ENCODE measurements at regions of chr13 and their contacts with region 1.

Region 1: DNA sequence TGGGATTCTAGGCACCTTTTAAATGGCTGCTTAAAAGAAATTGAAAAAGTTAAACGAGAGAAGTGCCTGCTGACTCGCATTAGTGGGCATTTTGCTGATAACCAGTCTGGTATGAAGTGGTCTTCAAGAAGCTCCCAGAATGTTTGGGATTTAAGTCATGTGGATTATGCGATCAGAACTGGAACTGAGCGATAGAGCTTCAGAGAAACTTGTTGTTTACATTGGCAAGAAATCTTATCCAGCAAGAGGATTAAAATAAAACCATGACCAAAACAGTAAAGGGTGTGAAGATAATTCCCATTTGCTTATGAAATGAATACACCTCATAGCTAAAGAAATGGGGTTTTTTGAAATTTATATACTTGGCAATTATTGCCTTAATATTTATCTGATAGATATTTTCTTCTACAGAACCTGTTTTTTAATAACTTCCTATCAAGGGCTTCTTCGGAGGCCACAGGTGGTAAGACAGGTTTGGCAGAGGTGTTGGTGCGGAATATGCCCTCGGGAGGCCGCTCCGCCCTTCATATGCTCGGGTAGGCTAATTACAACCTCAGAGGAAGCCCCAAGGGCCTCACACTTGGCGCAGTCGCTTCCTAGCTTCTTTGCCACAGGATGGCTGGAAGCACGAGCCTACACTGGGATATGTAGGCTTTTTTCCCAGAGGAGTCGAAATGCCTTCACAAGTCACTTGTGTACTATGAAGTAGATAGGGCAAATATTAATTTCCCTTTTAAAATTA is 68.6 kb downstream of the LMO7 start:
- DNase-seq: peak; percentile 74
- ATAC-seq: peak; percentile 75
- H3K4me3 ChIP-seq: peak overlapping the region; percentile 53; the same call in 1 of the 2 replicates
- H3K27ac ChIP-seq: peak overlapping the region; percentile 100
- H3K4me1 ChIP-seq: peaks cover 34% of the 10 kb centered on the region
- H3K27me3 ChIP-seq: no peaks in the 10 kb centered on the region
- CTCF ChIP-seq: no peak

Region 2: DNA sequence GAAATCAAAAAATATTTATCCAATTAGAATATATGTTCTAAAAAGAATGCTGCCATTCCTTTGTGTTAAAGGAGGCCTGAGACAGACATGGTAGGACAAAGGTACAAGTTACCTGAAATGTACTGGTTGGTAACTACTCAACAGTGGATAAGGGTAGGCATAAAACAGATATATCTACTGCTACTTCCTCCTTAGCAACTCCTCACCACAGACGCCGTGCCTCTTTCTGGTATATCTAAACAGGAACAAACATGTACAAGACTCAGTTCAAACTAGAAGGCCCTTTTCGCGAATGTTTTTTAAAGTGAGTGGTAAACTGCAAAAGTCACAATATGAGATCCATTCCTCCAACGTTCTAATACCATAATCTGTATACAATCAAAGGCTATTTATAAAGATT is 309.7 kb before region 1 on chr13:
- CTCF ChIA-PET with region 1: no interaction called
- POLR2A ChIA-PET with region 1: no interaction called
- intact Hi-C with region 1: no loop called
- DNase-seq: no peak
- ATAC-seq: no peak
- H3K4me3 ChIP-seq: no peak overlapping the region
- H3K27ac ChIP-seq: no peak overlapping the region
- H3K4me1 ChIP-seq: no peaks in the 10 kb centered on the region
- H3K27me3 ChIP-seq: no peaks in the 10 kb centered on the region
- CTCF ChIP-seq: no peak

Region 3: DNA sequence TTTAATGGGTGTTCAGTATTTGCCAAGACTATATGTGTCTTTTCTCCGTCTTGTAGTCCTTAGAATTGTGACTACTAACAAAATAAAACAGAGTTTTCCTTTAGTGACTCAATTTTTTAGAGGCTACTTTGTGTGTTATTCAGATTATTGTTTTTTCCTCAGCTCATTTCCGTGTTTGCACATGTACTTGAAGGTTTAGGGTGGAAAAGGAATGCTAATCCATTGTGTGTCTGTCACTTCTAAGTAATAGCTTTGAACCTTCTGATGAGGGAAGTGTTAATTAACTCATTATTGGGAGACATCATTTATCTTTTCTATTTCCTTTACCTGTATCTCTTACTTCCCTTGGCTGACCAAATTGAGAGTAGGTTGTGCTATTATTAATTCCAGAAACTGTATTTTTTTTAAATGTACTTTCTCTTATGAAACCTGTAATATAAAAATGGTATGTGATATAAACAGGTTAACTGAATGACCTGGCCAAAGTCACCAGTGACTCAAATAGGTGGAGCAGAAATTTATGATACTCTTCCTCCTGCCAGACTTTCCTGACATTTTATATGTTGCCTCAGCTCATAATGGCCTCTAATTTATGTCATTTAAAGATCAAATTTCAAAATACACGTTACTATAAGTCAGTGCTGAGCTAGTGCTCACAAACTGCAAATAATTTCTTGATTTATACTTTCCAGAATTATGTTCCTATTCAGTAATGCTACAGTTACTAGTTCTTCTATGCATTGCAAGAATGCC is 20.2 kb after region 1 on chr13:
- CTCF ChIA-PET with region 1: no interaction called
- POLR2A ChIA-PET with region 1: interaction called, 3 read pairs
- intact Hi-C with region 1: loop called (anchors 1 kb)
- DNase-seq: peak; percentile 70
- ATAC-seq: peak; percentile 80
- H3K4me3 ChIP-seq: peak overlapping the region; percentile 0; the same call in 1 of the 2 replicates
- H3K27ac ChIP-seq: peak overlapping the region; percentile 98
- H3K4me1 ChIP-seq: peaks cover 31% of the 10 kb centered on the region
- H3K27me3 ChIP-seq: no peaks in the 10 kb centered on the region
- CTCF ChIP-seq: no peak

Region 4: GRCh38 chr13:75771818-75772217 is 67.1 kb after region 1 on chr13:
- CTCF ChIA-PET with region 1: no interaction called
- POLR2A ChIA-PET with region 1: no interaction called
- intact Hi-C with region 1: loop called (anchors 2 kb)
- DNase-seq: peak; percentile 80
- ATAC-seq: peak; percentile 90
- H3K4me3 ChIP-seq: peak overlapping the region; percentile 50; the same call in 1 of the 2 replicates
- H3K27ac ChIP-seq: peak overlapping the region; percentile 95
- H3K4me1 ChIP-seq: peaks cover 68% of the 10 kb centered on the region
- H3K27me3 ChIP-seq: no peaks in the 10 kb centered on the region
- CTCF ChIP-seq: no peak

Region 5: GRCh38 chr13:75798353-75799255 is 93.9 kb after region 1 on chr13:
- CTCF ChIA-PET with region 1: no interaction called
- POLR2A ChIA-PET with region 1: no interaction called
- intact Hi-C with region 1: loop called (anchors 5 kb)
- DNase-seq: peak; percentile 85
- ATAC-seq: peak; percentile 83
- H3K4me3 ChIP-seq: no peak overlapping the region
- H3K27ac ChIP-seq: peak overlapping the region; percentile 89
- H3K4me1 ChIP-seq: peaks cover 46% of the 10 kb centered on the region
- H3K27me3 ChIP-seq: no peaks in the 10 kb centered on the region
- CTCF ChIP-seq: no peak

Measured in PC-3 (cell line).